A673 (cell line): ENCODE measurements at regions of chr1 and their contacts with region 1.

Region 1: DNA sequence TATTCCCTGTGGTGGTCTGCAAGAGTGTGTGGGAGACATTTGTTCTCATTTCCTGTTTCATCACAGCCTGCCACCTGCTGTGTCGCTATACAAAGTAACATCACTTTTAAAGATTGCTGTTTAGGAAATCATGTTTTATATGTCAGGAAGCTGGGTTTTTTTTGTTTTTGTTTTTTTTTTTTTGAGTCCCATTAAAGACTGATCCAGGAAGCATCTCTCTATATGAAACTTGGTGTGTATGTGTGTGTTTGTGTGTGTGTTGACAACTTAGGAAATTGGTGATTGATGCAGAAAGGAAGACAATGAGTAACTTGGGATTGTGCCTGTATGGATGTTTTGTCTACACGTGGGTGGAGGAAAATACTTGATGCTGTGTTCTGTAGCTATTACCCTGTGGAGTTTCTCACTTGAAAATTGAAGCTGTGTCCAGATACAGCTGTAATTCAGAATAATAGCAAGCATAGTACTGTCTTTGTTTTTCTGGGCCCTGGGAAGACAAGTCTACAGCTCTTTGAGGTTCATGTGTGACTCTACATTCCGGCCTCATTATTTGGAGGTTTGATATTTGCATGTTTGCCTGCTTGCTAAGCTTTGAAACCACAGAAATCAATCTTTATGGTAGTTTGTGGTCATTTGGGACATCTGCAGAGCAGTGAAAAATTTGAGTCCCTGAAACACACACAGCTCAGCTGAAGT is 47.9 kb downstream of the LAMC1 start:
- DNase-seq: peak; percentile 97
- H3K4me3 ChIP-seq: no peak overlapping the region
- H3K27ac ChIP-seq: peak overlapping the region; percentile 71
- H3K4me1 ChIP-seq: peaks cover 57% of the 10 kb centered on the region
- H3K27me3 ChIP-seq: no peaks in the 10 kb centered on the region
- CTCF ChIP-seq: no peak

Region 2: DNA sequence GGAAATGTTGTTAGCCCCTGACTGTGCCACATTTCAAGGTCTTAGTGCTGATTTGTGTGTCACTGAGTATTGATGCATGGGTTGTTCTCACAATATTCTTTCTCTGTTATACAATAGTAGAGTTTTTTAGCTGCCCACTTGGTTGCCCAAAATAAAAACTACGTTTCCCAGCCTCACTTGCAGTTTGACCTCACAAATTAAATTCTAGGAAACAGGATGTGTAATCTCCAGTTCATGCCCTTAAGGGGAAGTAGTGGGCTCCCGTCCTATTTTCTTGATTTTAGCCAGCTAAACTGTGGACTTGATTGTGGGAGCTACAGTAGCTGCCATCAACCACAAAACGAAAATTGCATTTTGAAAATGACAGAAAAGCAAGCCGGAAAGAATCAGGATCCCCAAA is 75.2 kb before region 1 on chr1:
- CTCF ChIA-PET with region 1: no interaction called
- POLR2A ChIA-PET with region 1: no interaction called
- intact Hi-C with region 1: no loop called
- DNase-seq: no peak
- H3K4me3 ChIP-seq: no peak overlapping the region
- H3K27ac ChIP-seq: no peak overlapping the region
- H3K4me1 ChIP-seq: no peaks in the 10 kb centered on the region
- H3K27me3 ChIP-seq: no peaks in the 10 kb centered on the region
- CTCF ChIP-seq: no peak

Region 3: DNA sequence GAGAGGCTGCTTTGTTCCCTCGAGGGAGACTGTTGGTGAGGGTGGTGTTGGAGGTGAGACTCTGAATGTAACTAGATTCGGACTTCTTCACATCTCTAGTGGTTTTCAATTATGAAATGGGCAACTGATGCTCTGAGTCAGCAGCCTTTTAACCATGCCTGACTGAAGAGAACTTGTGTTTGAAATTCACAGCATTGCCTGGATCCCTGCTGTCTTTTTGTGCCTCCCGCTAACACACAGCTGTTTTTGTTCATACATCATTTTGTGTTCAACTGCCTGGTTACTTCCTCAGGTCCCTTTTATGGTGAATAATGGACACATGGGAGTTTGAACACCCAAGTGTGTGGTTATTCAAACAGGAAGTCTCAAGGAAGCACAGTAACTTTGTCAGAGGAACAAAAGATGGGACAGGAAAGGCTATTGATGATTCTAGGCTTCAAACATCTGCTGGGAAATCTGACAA is 31.1 kb before region 1 on chr1:
- CTCF ChIA-PET with region 1: no interaction called
- POLR2A ChIA-PET with region 1: interaction called, 3 read pairs
- intact Hi-C with region 1: loop called (anchors 2 kb)
- DNase-seq: peak; percentile 98
- H3K4me3 ChIP-seq: peak overlapping the region; percentile 23
- H3K27ac ChIP-seq: peak overlapping the region; percentile 98
- H3K4me1 ChIP-seq: peaks cover 82% of the 10 kb centered on the region
- H3K27me3 ChIP-seq: no peaks in the 10 kb centered on the region
- CTCF ChIP-seq: no peak